Activated naive CD4-positive, alpha-beta T cell treated with anti-CD3 and anti-CD28 coated beads for 36 hours (primary cell): ENCODE measurements at regions of chr7 and their contacts with region 1.

Region 1: DNA sequence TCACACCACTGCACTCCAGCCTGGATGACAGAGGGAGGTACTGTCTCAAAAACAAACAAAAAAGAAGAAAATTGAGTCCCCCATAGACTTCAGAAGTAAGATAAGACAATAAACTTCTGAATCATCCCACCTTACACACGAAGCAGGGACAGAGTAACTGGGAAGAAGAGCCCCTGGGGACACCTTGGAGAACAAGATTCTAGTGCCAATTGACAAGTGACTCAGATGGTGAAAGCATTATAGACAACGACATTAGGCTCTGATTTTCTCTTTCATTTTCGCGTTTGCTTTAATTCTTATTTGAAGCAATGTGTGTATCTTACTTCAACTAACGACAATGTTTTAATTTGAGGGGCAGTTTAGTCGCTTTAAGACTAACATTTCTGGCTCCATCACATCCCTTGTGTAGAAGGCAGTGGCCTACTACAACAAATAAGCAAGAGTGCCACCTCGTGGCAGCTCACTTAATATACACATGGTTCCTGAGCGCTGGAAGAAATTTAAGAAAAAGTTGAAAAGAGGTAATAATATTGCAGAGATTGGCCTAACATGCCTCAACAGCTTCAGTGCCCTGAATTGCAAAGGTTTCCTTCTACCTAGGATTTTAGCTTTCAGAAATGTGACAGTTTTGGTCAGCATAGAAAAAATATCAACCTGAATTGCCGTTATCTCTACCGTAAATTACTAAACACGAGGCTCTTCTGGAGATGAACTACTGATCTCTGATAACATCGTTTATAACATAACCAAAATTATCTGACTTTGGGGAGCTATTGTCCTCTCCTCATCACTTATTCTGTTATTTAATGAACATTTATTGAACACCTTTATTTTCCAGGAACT is 36.7 kb downstream of the ASNS start:
- DNase-seq: peak; percentile 78
- H3K4me3 Mint-ChIP-seq: no peak overlapping the region
- H3K27ac Mint-ChIP-seq: no peak overlapping the region
- H3K4me1 Mint-ChIP-seq: no peaks in the 10 kb centered on the region
- H3K27me3 Mint-ChIP-seq: peaks cover 16% of the 10 kb centered on the region

Region 2: GRCh38 chr7:95916573-95917297 is 1918.8 kb before region 1 on chr7:
- CTCF ChIA-PET with region 1: no interaction called
- intact Hi-C with region 1: loop called (anchors 5 kb)
- DNase-seq: peak; percentile 85
- H3K4me3 Mint-ChIP-seq: no peak overlapping the region
- H3K27ac Mint-ChIP-seq: no peak overlapping the region
- H3K4me1 Mint-ChIP-seq: peaks cover 3% of the 10 kb centered on the region
- H3K27me3 Mint-ChIP-seq: peaks cover 24% of the 10 kb centered on the region

Region 3: GRCh38 chr7:97104719-97105238 is 730.7 kb before region 1 on chr7:
- CTCF ChIA-PET with region 1: interaction called, 7 read pairs
- intact Hi-C with region 1: loop called (anchors 1 kb)
- DNase-seq: peak; percentile 81
- H3K4me3 Mint-ChIP-seq: no peak overlapping the region
- H3K27ac Mint-ChIP-seq: no peak overlapping the region
- H3K4me1 Mint-ChIP-seq: no peaks in the 10 kb centered on the region
- H3K27me3 Mint-ChIP-seq: peaks cover 34% of the 10 kb centered on the region

Region 4: GRCh38 chr7:97145068-97145467 is 690.4 kb before region 1 on chr7:
- CTCF ChIA-PET with region 1: no interaction called
- intact Hi-C with region 1: loop called (anchors 1 kb)
- DNase-seq: no peak
- H3K4me3 Mint-ChIP-seq: no peak overlapping the region
- H3K27ac Mint-ChIP-seq: no peak overlapping the region
- H3K4me1 Mint-ChIP-seq: peaks cover 3% of the 10 kb centered on the region
- H3K27me3 Mint-ChIP-seq: no peaks in the 10 kb centered on the region

Region 5: DNA sequence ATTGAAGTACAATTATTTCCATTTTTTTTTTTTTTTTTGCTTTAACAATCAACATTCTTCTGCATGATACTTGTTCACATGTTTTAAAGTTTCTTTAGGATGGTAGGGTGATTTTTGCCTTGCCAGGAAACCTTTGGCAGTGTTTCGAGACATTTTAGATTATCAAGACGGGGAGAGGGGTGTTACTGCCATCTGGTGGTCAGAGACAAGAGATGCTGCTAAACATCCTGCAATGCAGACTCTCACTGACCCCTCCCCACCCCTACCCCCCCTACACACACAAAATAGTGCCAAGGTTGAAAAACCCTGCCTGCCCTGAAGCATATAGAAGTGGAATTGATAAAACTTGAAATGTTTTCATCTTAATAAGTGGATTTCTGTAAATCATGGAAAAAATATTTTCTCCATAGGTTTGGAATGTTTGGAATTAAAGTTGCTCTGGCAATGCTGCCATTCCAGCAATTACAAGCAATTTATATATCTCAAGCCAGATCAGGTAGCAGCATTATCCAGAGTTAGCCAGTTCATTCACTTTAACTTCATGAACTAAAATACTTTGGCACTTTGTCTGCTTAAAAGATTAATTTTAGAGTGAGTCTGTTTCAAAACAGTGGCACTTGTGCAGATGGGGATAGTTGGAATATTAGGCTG is 655.9 kb before region 1 on chr7:
- CTCF ChIA-PET with region 1: no interaction called
- intact Hi-C with region 1: loop called (anchors 5 kb)
- DNase-seq: peak; percentile 66
- H3K4me3 Mint-ChIP-seq: no peak overlapping the region
- H3K27ac Mint-ChIP-seq: no peak overlapping the region
- H3K4me1 Mint-ChIP-seq: peaks cover 3% of the 10 kb centered on the region
- H3K27me3 Mint-ChIP-seq: no peaks in the 10 kb centered on the region

Region 6: GRCh38 chr7:97499204-97499603 is 336.3 kb before region 1 on chr7:
- CTCF ChIA-PET with region 1: interaction called, 7 read pairs
- intact Hi-C with region 1: loop called (anchors 1 kb)
- DNase-seq: peak; percentile 41
- H3K4me3 Mint-ChIP-seq: no peak overlapping the region
- H3K27ac Mint-ChIP-seq: no peak overlapping the region
- H3K4me1 Mint-ChIP-seq: no peaks in the 10 kb centered on the region
- H3K27me3 Mint-ChIP-seq: peaks cover 5% of the 10 kb centered on the region

Region 7: GRCh38 chr7:97845622-97846203 is 10.2 kb after region 1 on chr7:
- CTCF ChIA-PET with region 1: interaction called, 24 read pairs
- intact Hi-C with region 1: loop called (anchors 1 kb)
- DNase-seq: peak; percentile 39
- H3K4me3 Mint-ChIP-seq: no peak overlapping the region
- H3K27ac Mint-ChIP-seq: no peak overlapping the region
- H3K4me1 Mint-ChIP-seq: no peaks in the 10 kb centered on the region
- H3K27me3 Mint-ChIP-seq: no peaks in the 10 kb centered on the region